Posterior cingulate gyrus (tissue), 11 donors: ENCODE measurements at regions of chr20 and their contacts with region 1.

Region 1: DNA sequence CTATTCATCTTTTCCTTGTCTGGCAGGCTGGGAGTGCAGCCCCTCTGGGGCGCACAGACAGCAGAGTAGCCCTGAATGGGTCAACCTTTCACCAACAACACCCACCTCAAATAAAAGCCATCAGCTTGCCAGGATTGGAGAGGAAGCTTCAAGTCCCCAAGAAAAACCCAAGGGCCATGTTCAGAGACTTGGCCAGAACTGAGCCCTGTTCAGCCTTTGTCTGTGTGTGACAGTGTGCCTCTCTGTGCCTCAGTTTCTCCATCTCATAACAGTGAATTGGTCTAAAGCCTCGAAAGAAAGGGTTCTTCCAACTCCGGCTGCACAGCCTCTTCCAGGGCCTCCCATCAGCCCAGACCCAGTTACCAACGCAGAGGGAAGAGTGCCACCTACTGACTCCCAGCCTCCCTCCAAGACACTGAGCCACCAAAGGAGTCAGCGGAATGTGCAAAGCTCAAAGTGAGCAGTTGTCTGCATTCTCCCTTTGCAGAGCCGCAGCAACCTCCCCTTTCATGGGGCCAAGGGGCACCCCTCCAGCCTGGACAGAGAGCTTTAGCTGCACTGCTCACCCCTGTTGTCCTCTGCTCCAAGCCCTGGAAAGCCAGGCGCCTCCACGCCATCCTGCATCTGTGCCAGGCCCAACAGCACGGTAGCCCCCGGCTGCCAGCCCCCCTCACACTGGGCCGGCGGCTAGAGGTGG is 82.7 kb upstream of the TOP1 start:
- DNase-seq: peak; percentile 40 to 95 (median 70)

Region 2: GRCh38 chr20:39885975-39886649 is 1059.8 kb before region 1 on chr20:
- intact Hi-C with region 1: loop called (anchors 5 kb)
- DNase-seq: peak in 6 of 10 donors; percentile 29 to 84 (median 37)

Region 3: GRCh38 chr20:40741507-40742106 is 204.3 kb before region 1 on chr20:
- intact Hi-C with region 1: loop called (anchors 5 kb)
- DNase-seq: peak in 3 of 10 donors; percentile 33 to 59 (median 40)

Region 4: GRCh38 chr20:41003143-41003883 is 57.4 kb after region 1 on chr20:
- intact Hi-C with region 1: no loop called
- DNase-seq: peak in 2 of 10 donors; percentile 15 to 21